Activated CD4-positive, alpha-beta memory T cell treated with anti-CD3 and anti-CD28 coated beads, Interleukin-2, amount 10 ng/mL, durations not matched to agents 7 days and 5 days (primary cell): ENCODE measurements at regions of chr6 and their contacts with region 1.

Region 1: GRCh38 chr6:26025894-26026832 is 61.1 kb upstream of the HFE start:
- DNase-seq: peak; percentile 94
- H3K4me3 Mint-ChIP-seq: peak overlapping the region; percentile 75
- H3K27ac Mint-ChIP-seq: peak overlapping the region; percentile 100
- H3K4me1 Mint-ChIP-seq: peaks cover 84% of the 10 kb centered on the region
- H3K27me3 Mint-ChIP-seq: peaks cover 2% of the 10 kb centered on the region

Region 2: GRCh38 chr6:26003102-26003694 is 23.0 kb before region 1 on chr6:
- CTCF ChIA-PET with region 1: interaction called, 100 read pairs
- POLR2A ChIA-PET with region 1: interaction called, 31 read pairs
- DNase-seq: peak; percentile 44
- H3K4me3 Mint-ChIP-seq: no peak overlapping the region
- H3K27ac Mint-ChIP-seq: no peak overlapping the region
- H3K4me1 Mint-ChIP-seq: peaks cover 5% of the 10 kb centered on the region
- H3K27me3 Mint-ChIP-seq: no peaks in the 10 kb centered on the region

Region 3: GRCh38 chr6:26054857-26055669 is 28.9 kb after region 1 on chr6:
- CTCF ChIA-PET with region 1: interaction called, 15 read pairs
- POLR2A ChIA-PET with region 1: interaction called, 2,531 read pairs
- DNase-seq: peak; percentile 92
- H3K4me3 Mint-ChIP-seq: peak overlapping the region; percentile 83
- H3K27ac Mint-ChIP-seq: peak overlapping the region; percentile 99
- H3K4me1 Mint-ChIP-seq: peaks cover 37% of the 10 kb centered on the region
- H3K27me3 Mint-ChIP-seq: no peaks in the 10 kb centered on the region

Region 4: DNA sequence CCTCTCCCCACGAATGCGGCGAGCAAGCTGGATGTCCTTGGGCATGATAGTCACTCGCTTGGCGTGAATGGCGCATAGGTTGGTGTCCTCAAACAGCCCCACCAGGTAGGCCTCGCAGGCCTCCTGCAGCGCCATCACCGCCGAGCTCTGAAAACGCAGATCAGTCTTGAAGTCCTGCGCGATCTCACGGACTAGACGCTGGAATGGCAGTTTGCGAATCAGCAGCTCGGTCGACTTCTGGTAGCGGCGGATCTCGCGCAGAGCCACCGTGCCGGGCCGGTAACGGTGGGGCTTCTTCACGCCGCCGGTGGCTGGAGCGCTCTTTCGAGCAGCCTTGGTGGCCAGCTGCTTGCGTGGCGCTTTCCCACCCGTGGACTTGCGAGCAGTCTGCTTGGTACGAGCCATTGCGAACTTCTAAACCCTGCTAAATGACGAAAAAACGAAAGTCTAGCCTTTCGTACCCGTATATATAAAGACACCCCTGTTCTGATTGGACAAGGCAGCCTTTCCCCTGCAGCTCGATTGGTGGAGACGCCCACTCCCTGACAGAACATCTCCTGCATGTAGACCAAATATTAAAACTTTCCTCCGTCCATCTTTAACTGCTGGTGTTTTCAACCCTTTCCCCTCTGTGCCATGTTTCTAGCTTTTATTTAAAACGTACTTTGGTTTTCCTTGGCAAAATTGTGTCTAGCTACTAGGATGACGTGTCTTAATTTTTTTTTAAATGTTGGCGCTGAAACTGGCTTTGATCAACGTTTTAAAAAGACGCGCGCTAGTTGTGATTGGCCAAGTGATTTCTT is 170.9 kb after region 1 on chr6:
- CTCF ChIA-PET with region 1: interaction called, 4 read pairs
- POLR2A ChIA-PET with region 1: interaction called, 295 read pairs
- DNase-seq: peak; percentile 85
- H3K4me3 Mint-ChIP-seq: peak overlapping the region; percentile 93
- H3K27ac Mint-ChIP-seq: peak overlapping the region; percentile 96
- H3K4me1 Mint-ChIP-seq: peaks cover 49% of the 10 kb centered on the region
- H3K27me3 Mint-ChIP-seq: no peaks in the 10 kb centered on the region

Region 5: DNA sequence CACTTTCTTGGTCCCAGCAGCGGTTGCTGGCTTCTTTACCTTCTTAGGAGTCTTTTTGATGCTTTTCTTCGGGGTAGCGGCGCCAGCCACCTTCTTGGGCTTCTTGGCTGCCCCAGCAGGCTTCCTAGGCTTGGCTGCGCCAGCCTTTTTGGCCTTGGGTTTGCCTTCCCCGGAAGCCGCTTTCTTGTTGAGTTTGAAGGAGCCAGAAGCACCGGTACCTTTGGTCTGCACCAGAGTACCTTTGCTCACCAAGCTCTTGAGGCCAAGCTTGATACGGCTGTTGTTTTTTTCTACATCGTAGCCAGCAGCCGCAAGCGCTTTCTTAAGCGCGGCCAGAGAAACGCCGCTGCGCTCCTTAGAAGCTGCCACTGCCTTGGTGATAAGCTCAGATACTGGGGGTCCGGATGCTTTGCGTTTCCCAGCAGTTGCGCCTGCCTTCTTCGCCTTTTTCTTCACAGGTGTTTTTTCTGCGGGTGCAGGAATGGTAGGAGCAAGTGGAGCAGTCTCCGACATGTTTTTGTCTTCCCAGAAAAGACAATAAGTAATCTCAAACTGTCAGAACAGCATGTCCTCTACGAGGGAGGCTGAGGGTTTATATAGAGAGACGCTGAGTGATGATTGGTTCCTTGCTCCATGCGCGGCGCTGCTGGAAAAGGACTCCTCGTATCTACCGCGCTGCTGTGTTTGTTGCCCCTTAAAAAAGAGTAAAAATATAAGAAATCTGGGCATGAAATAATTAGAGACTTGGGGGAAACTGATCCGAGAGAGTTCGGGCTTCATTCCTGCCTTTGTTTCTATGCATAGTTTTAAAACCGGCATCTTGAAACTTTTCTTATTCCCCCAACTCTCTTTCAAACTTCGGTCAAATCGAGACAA is 208.5 kb after region 1 on chr6:
- CTCF ChIA-PET with region 1: no interaction called
- POLR2A ChIA-PET with region 1: interaction called, 79 read pairs
- DNase-seq: peak; percentile 85
- H3K4me3 Mint-ChIP-seq: peak overlapping the region; percentile 76
- H3K27ac Mint-ChIP-seq: peak overlapping the region; percentile 95
- H3K4me1 Mint-ChIP-seq: peaks cover 41% of the 10 kb centered on the region
- H3K27me3 Mint-ChIP-seq: no peaks in the 10 kb centered on the region

Region 6: GRCh38 chr6:27146706-27147505 is 1120.7 kb after region 1 on chr6:
- CTCF ChIA-PET with region 1: no interaction called
- POLR2A ChIA-PET with region 1: interaction called, 32 read pairs
- DNase-seq: peak; percentile 87
- H3K4me3 Mint-ChIP-seq: no peak overlapping the region
- H3K27ac Mint-ChIP-seq: no peak overlapping the region
- H3K4me1 Mint-ChIP-seq: peaks cover 31% of the 10 kb centered on the region
- H3K27me3 Mint-ChIP-seq: no peaks in the 10 kb centered on the region

Region 7: GRCh38 chr6:27871924-27872638 is 1845.9 kb after region 1 on chr6:
- CTCF ChIA-PET with region 1: no interaction called
- POLR2A ChIA-PET with region 1: interaction called, 205 read pairs
- DNase-seq: peak; percentile 87
- H3K4me3 Mint-ChIP-seq: peak overlapping the region; percentile 81
- H3K27ac Mint-ChIP-seq: peak overlapping the region; percentile 99
- H3K4me1 Mint-ChIP-seq: peaks cover 60% of the 10 kb centered on the region
- H3K27me3 Mint-ChIP-seq: no peaks in the 10 kb centered on the region